Adrenal gland (tissue), 19 donors: ENCODE measurements at regions of chr2 and their contacts with region 1.

Region 1: GRCh38 chr2:160109936-160110673 is 47.7 kb upstream of the PLA2R1 start:
- DNase-seq: peak; percentile 68 to 82 (median 74)
- H3K4me3 ChIP-seq: no peak overlapping the region
- H3K27ac ChIP-seq: no peak overlapping the region
- H3K4me1 ChIP-seq: no peaks in the 10 kb centered on the region
- H3K27me3 ChIP-seq: no peaks in the 10 kb centered on the region
- CTCF ChIP-seq: peak; percentile 67 to 94 (median 88)
- POLR2A ChIP-seq: no peak

Region 2: GRCh38 chr2:159960383-159960782 is 149.7 kb before region 1 on chr2:
- intact Hi-C with region 1: no loop called
- DNase-seq: no peak
- H3K4me3 ChIP-seq: no peak overlapping the region
- H3K27ac ChIP-seq: no peak overlapping the region
- H3K4me1 ChIP-seq: no peaks in the 10 kb centered on the region
- H3K27me3 ChIP-seq: no peaks in the 10 kb centered on the region
- CTCF ChIP-seq: no peak
- POLR2A ChIP-seq: no peak

Region 3: DNA sequence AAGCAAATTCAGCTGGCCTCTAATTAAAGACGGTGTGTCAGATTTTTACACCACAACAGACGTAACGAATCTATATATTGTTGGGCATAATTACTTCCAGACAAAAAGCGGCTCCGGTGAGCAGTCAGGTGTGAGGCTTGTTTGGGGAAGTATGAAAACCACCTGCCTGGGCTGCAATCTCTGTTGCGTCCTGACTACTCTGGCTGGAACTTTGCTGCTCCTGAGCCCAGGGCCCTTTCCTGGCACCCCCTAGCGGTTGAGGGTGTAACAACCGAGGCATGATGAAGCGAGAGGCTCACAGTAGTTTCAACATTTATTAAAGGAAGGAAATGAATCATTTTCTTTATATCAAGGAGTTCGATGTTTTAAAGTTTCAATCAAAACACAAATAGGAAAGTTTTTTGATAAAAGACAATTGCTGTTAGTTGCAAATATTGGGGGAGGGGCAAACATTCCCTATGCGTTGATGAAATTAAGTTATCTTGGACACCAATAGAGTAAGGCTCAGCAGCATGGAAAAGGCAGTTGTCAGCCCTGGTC is 100.6 kb after region 1 on chr2:
- intact Hi-C with region 1: loop called in 1 of 2 experiments (anchors 5 kb)
- DNase-seq: peak; percentile 39 to 86 (median 67)
- H3K4me3 ChIP-seq: no peak overlapping the region
- H3K27ac ChIP-seq: no peak overlapping the region
- H3K4me1 ChIP-seq: peaks cover 0 to 13% of the 10 kb centered on the region in 2 donors
- H3K27me3 ChIP-seq: peaks cover 2% of the 10 kb centered on the region
- CTCF ChIP-seq: peak; percentile 54 to 76 (median 62)
- POLR2A ChIP-seq: no peak